GM12878 (cell line): ENCODE measurements at regions of chr19 and their contacts with region 1.

Region 1: GRCh38 chr19:860481-861101 is 1.1 kb downstream of the CFD start:
- DNase-seq: no peak
- ATAC-seq: peak; percentile 46
- H3K4me3 ChIP-seq: no peak overlapping the region
- H3K27ac ChIP-seq: no peak overlapping the region
- H3K4me1 ChIP-seq: peaks cover 10% of the 10 kb centered on the region
- H3K27me3 ChIP-seq: no peaks in the 10 kb centered on the region; a peak in 1 of 4 replicates
- CTCF ChIP-seq: peak in 2 of 3 experiments; percentile 6 to 10; a peak in 2 of 6 replicates
- EP300 ChIP-seq: no peak
- POLR2A ChIP-seq: peak; percentile 64; the same call in 1 of the 2 replicates
- RAD21 ChIP-seq: no peak

Region 2: GRCh38 chr19:892243-893050 is 31.9 kb after region 1 on chr19:
- CTCF ChIA-PET with region 1: interaction called, 22 read pairs
- POLR2A ChIA-PET with region 1: interaction called, 5 read pairs
- RAD21 ChIA-PET with region 1: interaction called, 14 read pairs
- SMC1A ChIA-PET with region 1: interaction called, 12 read pairs
- in situ Hi-C with region 1: no loop called
- intact Hi-C with region 1: no loop called
- DNase-seq: no peak
- ATAC-seq: peak; percentile 75
- H3K4me3 ChIP-seq: peak overlapping the region; percentile 95
- H3K27ac ChIP-seq: peak overlapping the region; percentile 96
- H3K4me1 ChIP-seq: no peaks in the 10 kb centered on the region
- H3K27me3 ChIP-seq: no peaks in the 10 kb centered on the region
- CTCF ChIP-seq: no peak
- EP300 ChIP-seq: no peak
- POLR2A ChIP-seq: no peak
- RAD21 ChIP-seq: no peak

Region 3: DNA sequence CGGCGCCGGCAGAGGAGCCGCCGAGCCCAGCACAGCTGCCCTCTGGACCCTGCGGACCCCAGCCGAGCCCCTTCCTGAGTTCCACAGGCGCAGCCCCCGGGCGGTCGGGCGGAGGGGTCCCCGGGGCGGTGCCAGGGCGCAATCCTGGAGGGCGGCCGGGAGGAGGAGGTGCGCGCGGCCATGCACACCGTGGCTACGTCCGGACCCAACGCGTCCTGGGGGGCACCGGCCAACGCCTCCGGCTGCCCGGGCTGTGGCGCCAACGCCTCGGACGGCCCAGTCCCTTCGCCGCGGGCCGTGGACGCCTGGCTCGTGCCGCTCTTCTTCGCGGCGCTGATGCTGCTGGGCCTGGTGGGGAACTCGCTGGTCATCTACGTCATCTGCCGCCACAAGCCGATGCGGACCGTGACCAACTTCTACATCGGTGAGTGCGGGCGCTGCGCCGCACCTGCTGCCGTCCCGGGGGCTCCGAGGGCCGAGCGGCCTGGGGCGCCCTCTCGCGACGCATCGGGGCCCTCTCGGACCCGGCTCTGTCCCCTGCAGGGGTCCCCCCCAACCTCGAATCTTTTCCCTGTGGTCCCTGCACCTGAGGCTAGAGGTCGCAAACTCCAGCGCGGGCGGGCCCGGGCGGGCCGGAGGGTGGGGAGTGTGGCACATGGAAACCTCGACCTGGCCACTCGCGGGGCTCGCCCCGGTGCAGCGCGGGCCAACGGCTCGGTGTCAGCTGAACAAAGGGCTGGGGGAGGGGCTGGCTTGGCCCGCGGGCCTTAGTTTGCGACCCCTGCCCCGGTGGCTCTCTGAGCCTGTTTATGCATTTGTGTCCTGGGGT is 56.9 kb after region 1 on chr19 and contains the start of gene KISS1R:
- CTCF ChIA-PET with region 1: interaction called, 50 read pairs
- POLR2A ChIA-PET with region 1: interaction called, 6 read pairs
- RAD21 ChIA-PET with region 1: interaction called, 46 read pairs
- SMC1A ChIA-PET with region 1: interaction called, 18 read pairs
- in situ Hi-C with region 1: loop called (anchors 5 kb)
- intact Hi-C with region 1: loop called (anchors 1 kb)
- DNase-seq: no peak
- ATAC-seq: peak; percentile 44
- H3K4me3 ChIP-seq: peak within 1 kb of the TSS; percentile 41; the same call in 1 of the 2 replicates
- H3K27ac ChIP-seq: no peak within 1 kb of the TSS
- H3K4me1 ChIP-seq: peaks cover 25% of the 10 kb centered on the region
- H3K27me3 ChIP-seq: peaks cover 0 to 2% of the 10 kb centered on the region in 2 experiments; a peak in 1 of 4 replicates
- CTCF ChIP-seq: peak; percentile 60 to 75 (median 74); a peak in 5 of 6 replicates
- EP300 ChIP-seq: no peak
- POLR2A ChIP-seq: 0 out of 2 replicates have a peak, but pooled peaks have one; percentile 16
- RAD21 ChIP-seq: peak; percentile 79
- polyA plus RNA-seq, gene KISS1R: 0.13 TPM in 1 of 2 experiments, not detected in the other

Region 4: DNA sequence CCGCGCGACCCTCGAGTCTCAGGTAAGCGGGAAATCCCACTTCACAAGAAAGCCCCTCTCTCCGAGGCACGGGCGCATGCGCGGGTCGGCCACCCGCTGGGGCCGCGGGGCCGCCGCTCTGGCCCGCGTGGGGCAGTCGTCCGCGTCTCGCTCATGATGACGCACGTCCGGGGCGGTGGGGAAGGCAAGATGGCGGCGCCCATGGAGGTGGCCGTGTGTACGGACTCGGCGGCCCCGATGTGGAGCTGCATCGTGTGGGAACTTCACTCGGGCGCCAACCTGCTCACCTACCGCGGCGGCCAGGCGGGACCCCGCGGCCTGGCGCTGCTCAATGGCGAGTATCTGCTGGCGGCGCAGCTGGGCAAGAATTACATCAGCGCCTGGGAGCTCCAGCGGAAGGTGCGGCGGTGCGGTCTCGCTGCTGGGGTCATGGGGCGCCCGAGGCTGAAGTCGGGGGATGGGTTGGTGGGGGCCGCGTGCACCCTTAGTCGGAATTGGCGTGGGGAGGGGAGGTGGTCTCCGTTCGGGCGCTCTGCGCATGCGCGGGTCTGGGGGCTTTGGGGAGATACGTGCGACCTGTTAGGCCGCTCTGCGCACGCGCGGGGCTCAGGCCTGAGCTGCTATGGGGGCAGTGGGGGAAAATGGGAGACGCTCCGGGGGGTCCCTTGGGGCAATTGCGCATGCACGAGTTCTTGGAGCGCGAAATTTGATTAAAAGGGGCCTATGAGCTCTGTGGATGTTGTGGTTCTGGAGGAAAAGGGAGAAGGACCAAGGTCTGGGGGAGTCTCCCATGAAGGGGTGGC is 123.8 kb after region 1 on chr19 and contains the start of gene WDR18:
- CTCF ChIA-PET with region 1: interaction called, 30 read pairs
- POLR2A ChIA-PET with region 1: interaction called, 3 read pairs
- RAD21 ChIA-PET with region 1: interaction called, 10 read pairs
- SMC1A ChIA-PET with region 1: interaction called, 15 read pairs
- in situ Hi-C with region 1: loop called (anchors 5 kb)
- intact Hi-C with region 1: loop called (anchors 2 kb)
- DNase-seq: peak; percentile 49
- ATAC-seq: peak; percentile 88
- H3K4me3 ChIP-seq: peak within 1 kb of the TSS; percentile 86
- H3K27ac ChIP-seq: peak within 1 kb of the TSS; percentile 92
- H3K4me1 ChIP-seq: peaks cover 19% of the 10 kb centered on the region
- H3K27me3 ChIP-seq: no peaks in the 10 kb centered on the region
- CTCF ChIP-seq: peak in 2 of 3 experiments; percentile 8 to 9; a peak in 1 of 6 replicates
- EP300 ChIP-seq: no peak
- POLR2A ChIP-seq: peak; percentile 90
- RAD21 ChIP-seq: no peak
- polyA plus RNA-seq, gene WDR18: 3.0 to 3.3 TPM

Region 5: GRCh38 chr19:996051-996838 is 135.7 kb after region 1 on chr19:
- CTCF ChIA-PET with region 1: interaction called, 4 read pairs
- POLR2A ChIA-PET with region 1: no interaction called
- RAD21 ChIA-PET with region 1: interaction called, 4 read pairs
- SMC1A ChIA-PET with region 1: no interaction called
- in situ Hi-C with region 1: no loop called
- intact Hi-C with region 1: loop called (anchors 5 kb)
- DNase-seq: no peak
- ATAC-seq: peak; percentile 32
- H3K4me3 ChIP-seq: no peak overlapping the region
- H3K27ac ChIP-seq: no peak overlapping the region
- H3K4me1 ChIP-seq: no peaks in the 10 kb centered on the region; the same call in 1 of the 2 replicates
- H3K27me3 ChIP-seq: peaks cover 3% of the 10 kb centered on the region in 2 experiments; a peak in 3 of 4 replicates
- CTCF ChIP-seq: no peak
- EP300 ChIP-seq: no peak
- POLR2A ChIP-seq: peak; percentile 54; the same call in 1 of the 2 replicates
- RAD21 ChIP-seq: no peak